Heart left ventricle (tissue), 16 donors: ENCODE measurements at regions of chr17 and their contacts with region 1.

Region 1: DNA sequence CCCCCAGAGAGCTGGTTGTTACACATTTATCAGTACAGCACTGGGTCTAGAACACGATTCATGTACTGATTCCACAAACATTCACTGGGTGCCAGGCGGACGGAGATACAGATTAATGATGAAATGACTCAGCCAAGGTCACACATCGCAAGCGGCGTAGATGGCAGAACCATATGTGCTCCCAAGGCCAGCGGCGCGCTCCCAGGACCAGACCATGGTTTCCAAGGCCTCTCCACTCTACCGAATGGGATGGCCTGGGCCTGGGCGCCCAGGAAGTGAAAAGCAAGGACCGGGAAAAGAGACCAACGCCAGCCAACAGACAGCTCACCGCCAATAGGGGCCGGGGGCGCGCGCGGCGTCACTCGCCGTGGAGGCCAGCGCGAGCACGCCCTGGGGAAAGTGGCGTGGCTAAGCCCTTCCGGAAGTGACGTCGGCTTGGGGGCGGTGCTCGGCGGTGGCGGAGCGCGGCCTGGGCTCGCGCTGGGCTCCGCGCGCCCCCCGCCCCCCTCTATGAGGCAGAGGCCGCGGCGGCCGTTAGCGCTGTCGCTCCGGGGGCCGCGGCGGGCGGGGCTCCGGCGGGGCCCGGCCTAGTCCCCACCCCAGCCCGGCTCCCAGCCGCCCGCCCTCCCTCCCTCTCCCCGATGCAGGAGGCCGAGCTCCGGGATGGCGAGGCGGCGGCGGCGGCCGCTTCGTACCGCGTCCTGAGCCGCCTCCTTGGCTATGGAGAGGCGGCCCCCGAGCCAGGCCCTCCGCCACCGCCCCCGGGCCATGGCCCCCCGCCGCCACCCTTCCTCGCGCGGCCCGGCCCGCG is at the start of gene SOCS7:
- DNase-seq: peak; percentile 94 to 97 (median 96)
- ATAC-seq: peak; percentile 95 to 97 (median 97)
- H3K4me3 ChIP-seq: peak within 1 kb of the TSS; percentile 64 to 97 (median 89)
- H3K27ac ChIP-seq: peak within 1 kb of the TSS; percentile 30 to 93 (median 86)
- H3K4me1 ChIP-seq: peaks cover 0 to 45% (median 32%) of the 10 kb centered on the region in 12 donors
- H3K27me3 ChIP-seq: no peaks in the 10 kb centered on the region
- CTCF ChIP-seq: no peak
- POLR2A ChIP-seq: peak in 1 of 2 donors; percentile 68
- total RNA-seq, gene SOCS7: 11.4 to 19.2 (median 15.0) TPM

Region 2: GRCh38 chr17:38320462-38320861 is 31.2 kb before region 1 on chr17:
- intact Hi-C with region 1: no loop called
- DNase-seq: no peak
- ATAC-seq: no peak
- H3K4me3 ChIP-seq: no peak overlapping the region
- H3K27ac ChIP-seq: no peak overlapping the region
- H3K4me1 ChIP-seq: peaks cover 0 to 1% (median 0%) of the 10 kb centered on the region in 12 donors
- H3K27me3 ChIP-seq: no peaks in the 10 kb centered on the region
- CTCF ChIP-seq: no peak
- POLR2A ChIP-seq: no peak

Region 3: GRCh38 chr17:38369124-38369886 is 17.7 kb after region 1 on chr17:
- intact Hi-C with region 1: no loop called
- DNase-seq: no peak
- ATAC-seq: peak in 1 of 4 donors; percentile 43
- H3K4me3 ChIP-seq: no peak overlapping the region
- H3K27ac ChIP-seq: no peak overlapping the region
- H3K4me1 ChIP-seq: peaks cover 0 to 7% (median 0%) of the 10 kb centered on the region in 12 donors
- H3K27me3 ChIP-seq: no peaks in the 10 kb centered on the region
- CTCF ChIP-seq: no peak
- POLR2A ChIP-seq: no peak

Region 4: DNA sequence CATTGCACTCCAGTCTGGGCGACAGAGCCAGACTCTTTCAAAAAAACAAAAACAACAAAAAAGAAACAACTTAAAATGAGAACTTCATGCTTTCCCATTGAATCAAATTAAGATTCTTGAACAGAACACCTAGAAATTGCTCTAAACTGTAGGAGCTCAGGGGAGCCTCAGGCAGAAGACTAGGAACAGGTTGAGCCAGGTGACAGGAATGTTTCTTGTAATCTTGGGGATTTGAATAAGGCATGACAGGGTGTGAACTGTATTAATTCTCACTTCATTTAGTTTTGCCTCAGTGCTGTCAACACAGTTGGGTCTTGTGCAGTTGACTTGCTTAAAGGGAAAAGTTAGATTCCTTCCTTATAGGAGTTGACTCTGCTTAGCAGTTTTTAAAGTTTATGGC is 27.8 kb after region 1 on chr17:
- intact Hi-C with region 1: loop called in 2 of 10 experiments (anchors 5 kb)
- DNase-seq: no peak
- ATAC-seq: no peak
- H3K4me3 ChIP-seq: no peak overlapping the region
- H3K27ac ChIP-seq: no peak overlapping the region
- H3K4me1 ChIP-seq: no peaks in the 10 kb centered on the region
- H3K27me3 ChIP-seq: no peaks in the 10 kb centered on the region
- CTCF ChIP-seq: no peak
- POLR2A ChIP-seq: no peak

Region 5: DNA sequence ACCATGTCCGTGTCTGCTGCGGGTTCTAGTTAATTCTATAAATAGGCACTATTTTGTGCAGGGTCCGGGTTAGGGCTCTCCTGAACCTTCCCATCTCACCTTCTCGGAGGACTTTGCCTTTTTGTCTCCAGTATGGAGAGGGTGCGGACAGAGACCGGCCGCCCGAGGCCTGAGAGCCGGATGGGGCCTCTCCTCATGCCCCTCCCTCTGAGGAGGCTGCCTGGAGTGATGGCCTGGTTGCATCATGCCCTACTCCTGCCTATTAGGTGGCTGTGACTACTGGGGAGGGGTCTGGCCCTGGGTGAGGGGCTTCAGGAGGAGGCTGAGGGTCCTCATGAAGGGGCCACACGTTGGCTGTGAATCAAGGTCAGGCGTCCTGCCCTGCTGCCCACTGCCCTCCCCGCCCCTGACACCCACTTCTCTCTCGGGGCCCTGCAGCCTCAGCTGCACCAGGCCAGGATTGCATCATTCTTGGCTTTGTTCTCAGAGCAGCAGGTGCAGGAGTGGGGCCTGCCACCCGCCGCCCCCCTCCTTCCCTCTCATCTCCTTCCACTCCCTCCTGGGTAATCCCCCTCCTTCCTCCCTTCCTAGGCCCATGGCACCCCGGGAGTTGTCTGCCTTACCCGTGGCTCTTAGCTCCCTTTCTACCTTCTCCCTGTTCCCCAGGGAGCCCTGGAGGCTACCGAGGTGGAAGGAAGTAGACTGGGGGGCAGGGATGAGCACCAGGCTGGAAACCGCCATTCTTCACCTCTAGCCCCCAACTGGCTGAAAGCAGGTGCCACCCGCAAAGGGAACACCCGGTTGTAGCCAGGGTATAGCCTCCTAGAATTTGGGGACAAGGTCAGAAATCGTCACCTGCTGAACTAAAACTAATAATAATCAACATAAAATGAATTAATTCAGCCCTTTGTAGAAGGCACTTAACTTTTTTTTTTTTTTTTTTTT is 63.9 kb after region 1 on chr17:
- intact Hi-C with region 1: loop called (anchors 1 to 2 kb)
- DNase-seq: peak in 1 of 5 donors; percentile 35
- ATAC-seq: peak in 3 of 4 donors; percentile 25 to 65 (median 33)
- H3K4me3 ChIP-seq: peak overlapping the region in 2 of 12 donors; percentile 4 to 13
- H3K27ac ChIP-seq: no peak overlapping the region
- H3K4me1 ChIP-seq: peaks cover 0 to 33% (median 12%) of the 10 kb centered on the region in 12 donors
- H3K27me3 ChIP-seq: peaks cover 0 to 31% (median 19%) of the 10 kb centered on the region in 9 donors
- CTCF ChIP-seq: no peak
- POLR2A ChIP-seq: no peak

Region 6: GRCh38 chr17:38456031-38456815 is 104.6 kb after region 1 on chr17:
- intact Hi-C with region 1: no loop called
- DNase-seq: no peak
- ATAC-seq: no peak
- H3K4me3 ChIP-seq: peak overlapping the region in 4 of 12 donors; percentile 55 to 64 (median 62)
- H3K27ac ChIP-seq: peak overlapping the region in 11 of 12 donors; percentile 34 to 95 (median 88)
- H3K4me1 ChIP-seq: peaks cover 7 to 96% (median 68%) of the 10 kb centered on the region in 12 donors
- H3K27me3 ChIP-seq: peaks cover 0 to 16% (median 0%) of the 10 kb centered on the region in 9 donors
- CTCF ChIP-seq: peak in 3 of 12 donors; percentile 15 to 39 (median 30)
- POLR2A ChIP-seq: no peak

Region 7: GRCh38 chr17:38469875-38470274 is 118.3 kb after region 1 on chr17:
- intact Hi-C with region 1: loop called in 1 of 10 experiments (anchors 10 kb)
- DNase-seq: no peak
- ATAC-seq: no peak
- H3K4me3 ChIP-seq: no peak overlapping the region
- H3K27ac ChIP-seq: peak overlapping the region in 1 of 12 donors; percentile 24
- H3K4me1 ChIP-seq: peaks cover 5 to 57% (median 30%) of the 10 kb centered on the region in 12 donors
- H3K27me3 ChIP-seq: no peaks in the 10 kb centered on the region
- CTCF ChIP-seq: no peak
- POLR2A ChIP-seq: no peak

Region 8: DNA sequence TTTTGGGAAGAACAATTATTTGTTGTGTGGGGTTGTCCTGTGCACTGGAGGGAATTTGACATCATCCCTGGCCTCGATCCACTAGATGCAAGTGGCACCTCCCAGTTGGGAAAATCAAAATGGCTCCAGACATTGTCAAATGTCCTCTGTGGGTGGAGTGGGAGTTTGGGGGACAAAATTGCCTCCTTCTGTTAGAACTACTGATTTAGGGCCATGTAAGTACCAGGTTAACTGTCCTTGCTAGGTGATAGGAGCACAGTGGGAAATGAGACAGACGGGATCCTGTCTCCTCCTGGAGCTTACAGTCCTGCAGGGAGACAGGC is 133.5 kb after region 1 on chr17:
- intact Hi-C with region 1: loop called in 4 of 10 experiments (anchors 5 to 10 kb)
- DNase-seq: no peak
- ATAC-seq: no peak
- H3K4me3 ChIP-seq: no peak overlapping the region
- H3K27ac ChIP-seq: peak overlapping the region in 7 of 12 donors; percentile 10 to 79 (median 58)
- H3K4me1 ChIP-seq: peaks cover 0 to 33% (median 13%) of the 10 kb centered on the region in 12 donors
- H3K27me3 ChIP-seq: no peaks in the 10 kb centered on the region
- CTCF ChIP-seq: no peak
- POLR2A ChIP-seq: no peak